IMR-90 (cell line): ENCODE measurements at regions of chr3 and their contacts with region 1.

Region 1: DNA sequence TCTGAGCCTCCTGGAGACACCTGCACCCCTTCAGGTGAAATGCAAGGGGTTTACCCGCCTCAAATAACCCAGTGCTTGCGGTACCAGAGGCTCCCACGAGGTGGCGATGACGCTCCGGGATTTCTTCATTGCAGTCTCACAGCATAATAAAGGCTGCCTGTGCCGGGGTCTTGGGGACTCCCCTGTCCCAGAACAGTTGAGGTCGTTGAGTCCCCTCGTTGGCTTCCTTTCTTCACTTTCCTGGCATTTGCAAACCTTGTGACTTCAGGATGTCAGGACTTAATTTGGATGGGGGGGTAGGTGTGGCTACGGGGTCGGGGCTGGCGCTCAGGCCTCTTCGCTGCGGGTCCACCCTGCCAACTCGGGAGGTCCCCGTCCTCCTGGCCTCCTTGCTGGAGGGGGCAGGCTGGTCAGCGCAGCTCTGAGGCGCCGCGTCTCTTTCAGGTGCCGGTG is 1.3 kb downstream of the GNAT1 start:
- DNase-seq: peak; percentile 40
- ATAC-seq: peak; percentile 63
- H3K4me3 ChIP-seq: no peak overlapping the region
- H3K27ac ChIP-seq: no peak overlapping the region
- H3K4me1 ChIP-seq: no peaks in the 10 kb centered on the region
- H3K27me3 ChIP-seq: peaks cover 29% of the 10 kb centered on the region
- CTCF ChIP-seq: peak; percentile 89
- POLR2A ChIP-seq: no peak
- RAD21 ChIP-seq: peak; percentile 89

Region 2: DNA sequence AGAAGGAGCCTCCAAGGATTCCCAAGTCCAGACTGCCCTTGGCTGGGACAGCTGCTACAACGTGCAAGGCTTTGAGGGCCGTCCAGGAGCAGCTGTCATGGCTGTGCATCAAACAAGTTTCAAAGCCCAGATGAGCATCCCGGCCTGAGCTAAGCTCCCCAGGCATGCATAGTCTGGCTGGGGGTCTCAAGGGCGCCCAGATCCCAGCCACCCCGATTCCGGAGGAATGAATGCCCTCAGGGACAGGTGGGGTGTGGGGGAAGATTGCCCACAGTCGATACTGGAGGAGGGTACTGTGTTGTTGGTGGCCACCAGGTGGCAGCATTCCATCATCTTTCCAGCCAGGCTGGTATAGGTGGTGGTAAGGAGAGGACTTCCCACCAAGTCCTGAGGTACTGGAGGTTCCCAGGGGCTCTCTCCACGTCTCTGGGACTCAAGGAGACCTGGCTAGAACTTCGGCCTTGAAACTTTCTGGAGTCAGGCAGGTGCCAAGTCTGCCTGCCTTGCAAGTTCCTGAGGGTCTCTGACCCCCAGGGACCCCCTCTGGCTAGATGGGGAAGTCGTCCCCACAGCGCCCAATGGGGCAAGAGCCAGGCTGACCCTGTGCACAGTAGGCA is 71.2 kb before region 1 on chr3:
- CTCF ChIA-PET with region 1: interaction called, 10 read pairs
- POLR2A ChIA-PET with region 1: no interaction called
- dilution Hi-C with region 1: no loop called
- in situ Hi-C with region 1: no loop called
- intact Hi-C with region 1: loop called (anchors 1 kb)
- DNase-seq: peak; percentile 79
- ATAC-seq: peak; percentile 70
- H3K4me3 ChIP-seq: no peak overlapping the region
- H3K27ac ChIP-seq: no peak overlapping the region
- H3K4me1 ChIP-seq: peaks cover 21% of the 10 kb centered on the region
- H3K27me3 ChIP-seq: no peaks in the 10 kb centered on the region
- CTCF ChIP-seq: peak; percentile 87
- POLR2A ChIP-seq: peak; percentile 26; the same call in 1 of the 2 replicates
- RAD21 ChIP-seq: peak; percentile 95

Region 3: DNA sequence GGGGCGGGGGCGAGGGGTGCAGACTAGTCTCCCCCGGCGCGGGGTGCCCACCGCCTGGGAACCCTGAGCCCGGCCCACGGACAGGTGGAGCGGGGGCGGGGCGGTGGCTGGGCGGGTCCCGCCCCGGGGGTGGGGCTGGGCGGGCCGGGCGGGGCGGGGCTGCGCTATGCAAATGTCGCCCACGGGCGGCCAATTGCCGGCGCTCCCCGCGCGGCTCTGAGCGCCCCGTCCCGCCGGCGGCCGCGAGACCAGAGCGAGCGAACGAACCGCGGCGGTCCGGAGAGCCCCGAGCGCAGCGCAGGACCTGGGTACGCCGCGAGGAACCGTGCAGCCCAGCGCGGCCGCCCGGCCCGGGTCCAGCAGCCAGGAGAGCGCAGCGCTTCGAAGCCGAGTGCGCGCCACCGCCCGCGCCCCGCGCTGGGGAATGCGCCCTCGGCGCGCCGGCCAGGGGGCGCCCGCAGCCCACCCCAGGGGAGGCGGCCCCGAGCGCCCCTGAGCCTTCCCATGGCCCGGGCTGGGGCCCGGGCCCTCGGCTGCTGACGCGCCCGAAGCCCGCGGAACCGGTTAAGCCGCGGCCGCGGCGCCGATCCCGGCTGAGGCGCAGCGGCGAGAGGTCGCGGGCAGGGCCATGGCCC is 37.8 kb before region 1 on chr3 and contains the start of gene SEMA3F:
- CTCF ChIA-PET with region 1: interaction called, 6 read pairs
- POLR2A ChIA-PET with region 1: interaction called, 3 read pairs
- dilution Hi-C with region 1: no loop called
- in situ Hi-C with region 1: no loop called
- intact Hi-C with region 1: loop called (anchors 1 kb)
- DNase-seq: peak; percentile 56
- ATAC-seq: peak; percentile 83
- H3K4me3 ChIP-seq: peak within 1 kb of the TSS; percentile 45
- H3K27ac ChIP-seq: peak within 1 kb of the TSS; percentile 15; the same call in 1 of the 2 replicates
- H3K4me1 ChIP-seq: peaks cover 22% of the 10 kb centered on the region
- H3K27me3 ChIP-seq: peaks cover 7% of the 10 kb centered on the region; the same call in 1 of the 2 replicates
- CTCF ChIP-seq: peak; percentile 37
- POLR2A ChIP-seq: peak; percentile 57
- RAD21 ChIP-seq: peak; percentile 38
- total RNA-seq, gene SEMA3F: 7.3 and 9.2 TPM in 2 replicates

Region 4: GRCh38 chr3:50272911-50273693 is 80.4 kb after region 1 on chr3:
- CTCF ChIA-PET with region 1: interaction called, 3 read pairs
- POLR2A ChIA-PET with region 1: no interaction called
- dilution Hi-C with region 1: no loop called
- in situ Hi-C with region 1: loop called (anchors 5 kb)
- intact Hi-C with region 1: loop called (anchors 1 kb)
- DNase-seq: peak; percentile 62
- ATAC-seq: peak; percentile 70
- H3K4me3 ChIP-seq: peak overlapping the region; percentile 7; the same call in 1 of the 2 replicates
- H3K27ac ChIP-seq: no peak overlapping the region
- H3K4me1 ChIP-seq: peaks cover 30% of the 10 kb centered on the region
- H3K27me3 ChIP-seq: no peaks in the 10 kb centered on the region
- CTCF ChIP-seq: peak; percentile 98
- POLR2A ChIP-seq: peak; percentile 58; the same call in 1 of the 2 replicates
- RAD21 ChIP-seq: peak; percentile 99

Region 5: DNA sequence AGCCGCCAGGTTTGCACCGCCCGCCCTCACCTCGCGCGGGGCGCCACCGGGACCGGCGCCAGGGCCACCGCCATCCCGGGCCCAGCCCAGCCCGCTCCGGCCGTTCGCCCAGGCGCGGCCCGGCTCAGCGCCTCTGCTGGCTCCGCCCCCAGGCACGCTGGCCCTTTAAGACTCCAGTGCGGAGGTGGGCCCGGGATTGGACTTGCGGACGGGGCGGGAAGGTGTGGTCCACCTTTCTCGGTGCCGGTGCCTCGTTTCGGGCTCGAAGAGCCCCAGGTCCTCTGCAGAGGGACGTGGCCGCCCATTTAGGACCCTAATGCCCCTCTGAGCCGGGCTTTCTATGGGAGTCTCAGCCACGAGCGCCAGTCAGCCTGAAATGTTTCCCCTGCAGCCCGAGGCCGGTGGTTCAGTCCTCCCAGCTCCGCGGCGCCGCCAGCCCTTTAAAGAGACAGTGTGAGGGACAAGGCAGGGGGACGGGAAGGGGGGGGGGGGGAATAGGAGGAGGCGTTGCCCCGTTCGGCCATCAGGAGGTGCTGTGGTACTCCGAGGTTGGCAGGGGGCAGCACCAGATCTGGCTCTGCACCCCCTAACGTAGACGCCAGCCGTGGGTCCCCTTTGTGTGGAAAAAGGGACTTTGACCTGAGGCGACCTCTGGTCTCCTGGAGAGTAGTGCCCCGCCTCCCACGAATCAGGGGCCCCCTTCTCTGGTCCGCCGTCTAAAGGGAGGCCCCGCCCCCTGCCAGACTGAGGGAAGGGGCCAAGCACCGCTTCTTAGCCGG is 128.8 kb after region 1 on chr3:
- CTCF ChIA-PET with region 1: no interaction called
- POLR2A ChIA-PET with region 1: no interaction called
- dilution Hi-C with region 1: no loop called
- in situ Hi-C with region 1: no loop called
- intact Hi-C with region 1: loop called (anchors 1 kb)
- DNase-seq: peak; percentile 83
- ATAC-seq: peak; percentile 90
- H3K4me3 ChIP-seq: peak overlapping the region; percentile 58
- H3K27ac ChIP-seq: peak overlapping the region; percentile 98
- H3K4me1 ChIP-seq: peaks cover 25% of the 10 kb centered on the region
- H3K27me3 ChIP-seq: no peaks in the 10 kb centered on the region
- CTCF ChIP-seq: peak; percentile 42
- POLR2A ChIP-seq: peak; percentile 80
- RAD21 ChIP-seq: no peak

Region 6: GRCh38 chr3:50388016-50388719 is 195.5 kb after region 1 on chr3:
- CTCF ChIA-PET with region 1: no interaction called
- POLR2A ChIA-PET with region 1: no interaction called
- dilution Hi-C with region 1: no loop called
- in situ Hi-C with region 1: no loop called
- intact Hi-C with region 1: no loop called
- DNase-seq: no peak
- ATAC-seq: peak; percentile 64
- H3K4me3 ChIP-seq: no peak overlapping the region
- H3K27ac ChIP-seq: no peak overlapping the region
- H3K4me1 ChIP-seq: no peaks in the 10 kb centered on the region
- H3K27me3 ChIP-seq: peaks cover 63% of the 10 kb centered on the region
- CTCF ChIP-seq: 0 out of 2 replicates have a peak, but pooled peaks have one; percentile 22
- POLR2A ChIP-seq: no peak
- RAD21 ChIP-seq: peak; percentile 19; the same call in 1 of the 2 replicates